ENCODE measurements at regions of chr2 and their contacts with region 1.

Region 1: GRCh38 chr2:54558188-54559005 is 102.3 kb downstream of the SPTBN1 start:
- DNase-seq: peak; percentile 61 to 78
- ATAC-seq: peak; percentile 73 to 79
- H3K4me3 ChIP-seq: peak overlapping the region; percentile 67
- H3K27ac ChIP-seq: peak overlapping the region; percentile 91 to 92
- H3K4me1 ChIP-seq: peaks cover 53% of the 10 kb centered on the region
- CTCF ChIP-seq: no peak
- EP300 ChIP-seq: 0 out of 5 replicates have a peak, but pooled peaks of 1 of the 2 experiments have one; percentile 21
- POLR2A ChIP-seq: peak; percentile 7; the same call in 1 of the 2 replicates
- RAD21 ChIP-seq: no peak; a peak in 2 of 5 replicates

Region 2: GRCh38 chr2:54497763-54498680 is 60.4 kb before region 1 on chr2:
- CTCF ChIA-PET with region 1: no interaction called
- POLR2A ChIA-PET with region 1: no interaction called
- DNase-seq: peak in 1 of 2 experiments; percentile 56
- ATAC-seq: peak; percentile 82 to 83
- H3K4me3 ChIP-seq: no peak overlapping the region
- H3K27ac ChIP-seq: no peak overlapping the region
- H3K4me1 ChIP-seq: peaks cover 11% of the 10 kb centered on the region; the same call in 2 of the 3 replicates
- CTCF ChIP-seq: peak; percentile 30
- EP300 ChIP-seq: no peak
- POLR2A ChIP-seq: no peak
- RAD21 ChIP-seq: peak in 1 of 2 experiments; percentile 19; a peak in 2 of 5 replicates

Region 3: DNA sequence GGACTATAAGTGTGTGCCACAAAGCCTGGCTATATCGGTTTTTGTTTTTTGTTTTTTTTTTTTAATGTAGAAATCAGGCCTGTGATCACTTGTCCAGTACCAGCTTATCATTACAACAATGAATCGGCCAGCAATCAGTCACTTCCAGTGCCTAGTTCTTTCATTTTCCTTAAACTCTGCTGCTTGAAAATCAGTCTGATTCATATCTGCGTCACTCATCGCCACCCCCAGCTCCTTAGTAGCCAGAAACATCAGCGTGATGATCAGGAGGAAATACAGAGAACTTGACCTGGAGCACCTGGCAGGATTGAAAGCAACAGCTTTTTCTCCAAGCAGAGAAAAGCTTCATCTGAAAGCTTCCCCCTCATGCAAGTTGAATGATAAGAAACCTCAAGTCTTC is 26.8 kb before region 1 on chr2:
- CTCF ChIA-PET with region 1: interaction called, 91 read pairs
- POLR2A ChIA-PET with region 1: interaction called, 52 read pairs
- DNase-seq: peak; percentile 70 to 84
- ATAC-seq: peak; percentile 62 to 70
- H3K4me3 ChIP-seq: peak overlapping the region; percentile 8; the same call in 2 of the 3 replicates
- H3K27ac ChIP-seq: peak overlapping the region; percentile 89 to 98
- H3K4me1 ChIP-seq: peaks cover 65% of the 10 kb centered on the region
- CTCF ChIP-seq: no peak
- EP300 ChIP-seq: no peak; a peak in 1 of 5 replicates
- POLR2A ChIP-seq: no peak
- RAD21 ChIP-seq: peak; percentile 12 to 27; a peak in 2 of 5 replicates

Region 4: DNA sequence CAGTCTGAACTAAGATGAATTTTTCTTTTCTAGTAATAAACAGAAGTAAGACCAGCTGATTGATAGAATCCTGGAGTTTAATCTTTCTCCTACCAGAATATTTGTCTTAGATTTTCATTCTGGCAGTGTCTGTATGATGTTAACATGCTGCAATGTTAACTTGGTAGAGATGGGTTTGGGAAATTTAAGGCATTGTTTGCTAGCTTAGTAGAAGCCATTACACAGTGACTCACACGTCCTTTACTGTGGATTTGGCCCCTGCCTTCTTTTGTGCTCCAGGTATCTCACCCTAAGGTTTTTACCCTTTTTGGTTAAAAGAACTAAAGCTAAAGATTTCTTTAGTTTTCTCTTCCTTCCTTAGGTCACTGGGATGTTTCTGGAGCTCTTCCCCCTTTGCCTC is 18.2 kb before region 1 on chr2:
- CTCF ChIA-PET with region 1: interaction called, 16 read pairs
- POLR2A ChIA-PET with region 1: interaction called, 3 read pairs
- DNase-seq: no peak
- ATAC-seq: peak in 1 of 2 experiments; percentile 53; a peak in 3 of 6 replicates
- H3K4me3 ChIP-seq: no peak overlapping the region
- H3K27ac ChIP-seq: peak overlapping the region; percentile 56 to 76
- H3K4me1 ChIP-seq: peaks cover 50% of the 10 kb centered on the region
- CTCF ChIP-seq: no peak
- EP300 ChIP-seq: no peak
- POLR2A ChIP-seq: no peak
- RAD21 ChIP-seq: no peak

Region 5: DNA sequence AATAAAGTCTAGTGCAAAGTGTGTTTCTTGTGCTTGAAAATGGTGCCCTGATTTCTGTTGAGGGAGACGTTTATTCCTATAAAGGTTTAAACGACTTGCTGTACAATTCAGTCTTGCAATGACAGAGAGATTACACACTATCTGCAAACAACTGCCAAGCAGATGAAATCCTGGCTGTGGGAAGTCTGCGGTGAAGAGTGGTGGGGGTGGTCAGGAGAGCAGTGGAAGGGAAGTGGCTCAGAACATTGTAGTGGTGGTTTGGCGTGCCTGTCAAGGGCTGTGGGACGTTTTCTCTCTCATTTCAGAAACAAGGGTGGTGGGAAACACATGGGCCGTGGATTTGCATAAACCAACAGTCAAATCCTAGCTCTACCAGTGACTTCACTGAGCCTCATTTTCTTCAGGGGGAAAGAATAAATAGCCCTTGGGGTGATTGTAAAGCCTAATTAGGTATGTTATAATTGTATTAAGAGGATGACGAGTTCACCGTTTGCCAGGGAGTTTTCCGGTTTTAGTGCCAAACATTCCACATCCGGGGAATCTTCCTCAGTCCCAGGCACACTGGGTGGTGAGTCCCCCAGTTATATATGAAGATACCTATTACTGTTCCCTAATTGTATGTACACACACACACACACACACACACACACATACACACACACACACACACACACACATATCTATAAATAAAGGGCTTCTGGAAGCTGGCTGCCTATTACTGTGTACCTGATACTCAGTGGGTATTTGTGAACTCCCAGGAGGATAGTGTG is 12.7 kb after region 1 on chr2:
- CTCF ChIA-PET with region 1: interaction called, 15 read pairs
- POLR2A ChIA-PET with region 1: interaction called, 52 read pairs
- DNase-seq: peak; percentile 71 to 88
- ATAC-seq: peak; percentile 69 to 75
- H3K4me3 ChIP-seq: peak overlapping the region; percentile 20; the same call in 2 of the 3 replicates
- H3K27ac ChIP-seq: peak overlapping the region; percentile 93 to 97
- H3K4me1 ChIP-seq: peaks cover 93% of the 10 kb centered on the region
- CTCF ChIP-seq: no peak
- EP300 ChIP-seq: peak in 1 of 2 experiments; percentile 36; a peak in 2 of 5 replicates
- POLR2A ChIP-seq: no peak
- RAD21 ChIP-seq: peak; percentile 6 to 37; a peak in 1 of 5 replicates

Region 6: DNA sequence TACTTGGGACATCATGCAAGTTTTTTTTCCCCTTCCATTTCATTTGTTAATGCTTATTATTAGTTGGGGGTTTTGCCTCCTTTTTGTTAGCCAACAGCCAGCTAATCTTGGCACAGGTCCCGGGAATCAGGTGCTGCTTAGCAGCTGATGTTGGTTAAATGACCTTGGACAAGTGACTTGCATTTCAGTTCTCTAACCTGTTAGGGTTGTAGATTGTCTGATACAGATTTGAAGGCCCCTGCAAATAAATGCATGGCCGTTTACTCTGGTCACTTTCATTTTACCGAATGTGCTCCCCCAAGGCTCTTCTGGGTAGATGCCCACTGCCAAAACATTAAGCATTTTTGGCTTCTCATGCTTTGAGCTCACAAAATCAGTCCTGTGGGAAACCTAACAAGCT is 18.6 kb after region 1 on chr2:
- CTCF ChIA-PET with region 1: interaction called, 15 read pairs
- POLR2A ChIA-PET with region 1: interaction called, 52 read pairs
- DNase-seq: peak in 1 of 2 experiments; percentile 47
- ATAC-seq: no peak
- H3K4me3 ChIP-seq: no peak overlapping the region
- H3K27ac ChIP-seq: peak overlapping the region; percentile 60 to 97
- H3K4me1 ChIP-seq: peaks cover 95% of the 10 kb centered on the region
- CTCF ChIP-seq: no peak
- EP300 ChIP-seq: 0 out of 5 replicates have a peak, but pooled peaks of 1 of the 2 experiments have one; percentile 10
- POLR2A ChIP-seq: no peak
- RAD21 ChIP-seq: no peak

Region 7: GRCh38 chr2:54657664-54658083 is 99.3 kb after region 1 on chr2:
- CTCF ChIA-PET with region 1: interaction called, 10 read pairs
- POLR2A ChIA-PET with region 1: no interaction called
- DNase-seq: peak; percentile 62 to 68
- ATAC-seq: peak; percentile 75 to 87
- H3K4me3 ChIP-seq: no peak overlapping the region
- H3K27ac ChIP-seq: peak overlapping the region in 1 of 2 experiments; percentile 47; a peak in 2 of 6 replicates
- H3K4me1 ChIP-seq: peaks cover under 1% of the 10 kb centered on the region; the same call in 2 of the 3 replicates
- CTCF ChIP-seq: peak; percentile 58
- EP300 ChIP-seq: no peak
- POLR2A ChIP-seq: no peak
- RAD21 ChIP-seq: peak; percentile 60 to 70; a peak in 4 of 5 replicates

Region 8: GRCh38 chr2:55111570-55112228 is 553.3 kb after region 1 on chr2:
- CTCF ChIA-PET with region 1: no interaction called
- POLR2A ChIA-PET with region 1: no interaction called
- DNase-seq: peak; percentile 44 to 84
- ATAC-seq: peak; percentile 74 to 75
- H3K4me3 ChIP-seq: no peak overlapping the region
- H3K27ac ChIP-seq: peak overlapping the region; percentile 92 to 93
- H3K4me1 ChIP-seq: peaks cover 94% of the 10 kb centered on the region
- CTCF ChIP-seq: no peak
- EP300 ChIP-seq: no peak
- POLR2A ChIP-seq: no peak
- RAD21 ChIP-seq: peak in 1 of 2 experiments; percentile 41; a peak in 2 of 5 replicates